Activated CD4-positive, alpha-beta memory T cell treated with anti-CD3 and anti-CD28 coated beads for 36 hours (primary cell): ENCODE measurements at regions of chr5 and their contacts with region 1.

Region 1: GRCh38 chr5:151080623-151081430 is at the start of gene TNIP1:
- DNase-seq: peak; percentile 96
- H3K4me3 Mint-ChIP-seq: peak within 1 kb of the TSS; percentile 89
- H3K27ac Mint-ChIP-seq: peak within 1 kb of the TSS; percentile 94
- H3K4me1 Mint-ChIP-seq: peaks cover 69% of the 10 kb centered on the region
- H3K27me3 Mint-ChIP-seq: no peaks in the 10 kb centered on the region
- total RNA-seq, gene TNIP1: 388 to 401 TPM

Region 2: DNA sequence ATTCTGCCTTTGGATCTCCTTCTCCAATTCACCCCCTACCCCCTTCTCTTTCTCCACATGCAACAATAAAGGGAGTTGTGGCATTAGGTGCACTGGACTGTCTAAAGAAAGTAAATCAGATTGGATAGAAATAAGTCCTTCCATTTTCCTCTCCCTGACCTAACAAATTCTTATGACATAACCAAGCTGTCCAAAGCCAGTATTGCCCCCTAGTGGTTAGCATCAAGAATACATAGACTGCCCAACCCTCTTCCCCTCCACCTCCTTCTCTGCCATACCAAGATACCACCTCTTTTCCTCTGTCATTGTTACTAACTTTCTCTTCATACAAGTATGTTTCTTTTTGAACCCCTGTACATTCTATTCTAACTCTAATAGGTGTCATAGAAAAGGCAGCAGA is 1305.0 kb before region 1 on chr5:
- CTCF ChIA-PET with region 1: no interaction called
- POLR2A ChIA-PET with region 1: no interaction called
- intact Hi-C with region 1: no loop called
- DNase-seq: no peak
- H3K4me3 Mint-ChIP-seq: no peak overlapping the region
- H3K27ac Mint-ChIP-seq: no peak overlapping the region
- H3K4me1 Mint-ChIP-seq: peaks cover 15% of the 10 kb centered on the region
- H3K27me3 Mint-ChIP-seq: no peaks in the 10 kb centered on the region

Region 3: DNA sequence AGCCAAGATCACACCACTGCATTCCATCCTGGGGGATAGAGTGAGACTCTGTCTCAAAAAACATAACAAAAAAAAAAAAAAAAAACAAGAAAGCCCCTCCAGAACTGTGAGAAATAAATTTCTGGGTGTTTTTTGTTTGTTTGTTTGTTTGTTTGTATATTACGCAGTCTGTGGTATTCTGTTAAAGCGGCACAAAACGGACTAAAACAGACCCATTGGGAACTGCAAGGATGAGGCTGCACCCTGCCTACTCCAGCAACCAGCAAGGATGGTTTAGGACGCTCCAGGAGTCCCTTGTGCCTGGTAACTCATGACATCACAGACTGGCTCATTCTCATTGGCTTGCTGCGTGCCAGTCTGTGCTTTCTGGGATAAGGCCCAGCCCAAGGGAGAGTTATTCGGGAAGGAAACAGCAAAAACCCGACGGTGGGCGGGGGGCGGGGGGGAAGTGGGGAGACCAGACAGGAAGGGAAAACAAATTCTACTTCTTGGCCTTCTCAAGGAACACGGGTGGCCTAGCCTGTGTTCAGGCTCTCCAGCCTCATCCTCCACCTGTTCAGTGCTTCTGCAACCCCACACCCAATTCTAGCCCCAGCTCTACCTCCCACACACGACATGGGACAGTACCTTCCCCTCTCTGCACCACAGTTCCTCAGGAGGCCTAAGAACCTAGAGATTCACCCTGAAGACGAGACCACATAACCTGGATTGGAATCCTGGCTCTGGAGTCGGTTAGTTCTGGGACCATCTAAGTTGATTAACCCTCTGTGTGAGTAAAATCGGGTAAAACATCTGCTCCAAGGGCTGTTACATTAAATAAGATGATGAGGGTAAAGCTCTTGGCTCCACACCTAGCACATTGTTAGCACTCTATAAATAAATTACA is 670.9 kb before region 1 on chr5:
- CTCF ChIA-PET with region 1: no interaction called
- POLR2A ChIA-PET with region 1: no interaction called
- intact Hi-C with region 1: loop called (anchors 5 kb)
- DNase-seq: peak; percentile 70
- H3K4me3 Mint-ChIP-seq: peak overlapping the region; percentile 97
- H3K27ac Mint-ChIP-seq: peak overlapping the region; percentile 99
- H3K4me1 Mint-ChIP-seq: peaks cover 39% of the 10 kb centered on the region
- H3K27me3 Mint-ChIP-seq: no peaks in the 10 kb centered on the region

Region 4: DNA sequence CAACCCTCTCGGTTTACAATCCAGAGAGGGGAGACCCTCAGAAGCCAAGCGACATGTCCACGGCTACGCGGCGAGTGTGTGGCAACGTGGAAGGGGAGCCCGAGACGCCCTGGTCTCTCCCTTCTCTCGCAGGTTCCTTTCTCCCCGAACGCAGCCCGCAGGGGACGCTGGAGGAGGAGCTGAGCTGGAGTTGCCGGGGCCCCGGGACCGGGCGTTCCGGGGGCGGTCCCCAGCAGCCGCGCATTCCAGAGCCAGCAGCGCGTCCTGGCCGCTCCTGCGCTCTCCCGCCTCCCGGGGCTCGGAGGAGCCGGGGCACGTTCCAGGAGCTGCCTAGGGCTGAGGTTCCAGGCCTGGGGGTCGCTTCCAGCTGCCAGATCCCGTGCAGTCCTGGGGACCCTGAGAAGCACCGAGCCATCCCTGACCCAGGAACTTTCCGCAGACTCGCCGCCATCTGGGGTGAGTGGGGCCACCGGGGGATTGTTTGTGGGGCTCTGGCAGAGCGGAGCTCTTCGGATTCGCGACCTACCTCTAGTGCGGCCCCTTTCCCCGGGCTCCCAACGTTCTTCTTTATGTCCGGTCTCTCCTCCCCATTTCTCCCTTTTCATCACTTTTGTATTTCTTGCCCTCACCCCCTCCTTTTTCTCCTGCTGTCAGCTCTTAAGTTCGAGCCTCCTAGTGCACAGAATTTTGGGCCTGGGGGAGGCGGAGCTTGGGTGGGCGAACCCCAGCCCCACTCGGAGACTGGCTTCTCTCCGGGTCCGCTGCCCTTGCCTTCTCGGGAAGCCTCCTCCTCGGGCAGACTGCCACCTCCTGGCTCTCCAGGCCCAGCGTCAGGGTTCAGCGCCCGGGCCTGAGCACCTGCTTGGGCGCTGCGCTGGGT is 302.1 kb before region 1 on chr5 and contains the start of gene SMIM3:
- CTCF ChIA-PET with region 1: no interaction called
- POLR2A ChIA-PET with region 1: no interaction called
- intact Hi-C with region 1: loop called (anchors 5 kb)
- DNase-seq: peak; percentile 84
- H3K4me3 Mint-ChIP-seq: peak within 1 kb of the TSS; percentile 99
- H3K27ac Mint-ChIP-seq: peak within 1 kb of the TSS; percentile 84
- H3K4me1 Mint-ChIP-seq: peaks cover 52% of the 10 kb centered on the region
- H3K27me3 Mint-ChIP-seq: no peaks in the 10 kb centered on the region
- total RNA-seq, gene SMIM3: 22.4 to 22.8 TPM

Region 5: GRCh38 chr5:151063142-151063949 is 17.5 kb before region 1 on chr5:
- CTCF ChIA-PET with region 1: interaction called, 3 read pairs
- POLR2A ChIA-PET with region 1: interaction called, 115 read pairs
- intact Hi-C with region 1: loop called (anchors 1 kb)
- DNase-seq: no peak
- H3K4me3 Mint-ChIP-seq: no peak overlapping the region
- H3K27ac Mint-ChIP-seq: peak overlapping the region; percentile 94
- H3K4me1 Mint-ChIP-seq: peaks cover 97% of the 10 kb centered on the region
- H3K27me3 Mint-ChIP-seq: no peaks in the 10 kb centered on the region

Region 6: DNA sequence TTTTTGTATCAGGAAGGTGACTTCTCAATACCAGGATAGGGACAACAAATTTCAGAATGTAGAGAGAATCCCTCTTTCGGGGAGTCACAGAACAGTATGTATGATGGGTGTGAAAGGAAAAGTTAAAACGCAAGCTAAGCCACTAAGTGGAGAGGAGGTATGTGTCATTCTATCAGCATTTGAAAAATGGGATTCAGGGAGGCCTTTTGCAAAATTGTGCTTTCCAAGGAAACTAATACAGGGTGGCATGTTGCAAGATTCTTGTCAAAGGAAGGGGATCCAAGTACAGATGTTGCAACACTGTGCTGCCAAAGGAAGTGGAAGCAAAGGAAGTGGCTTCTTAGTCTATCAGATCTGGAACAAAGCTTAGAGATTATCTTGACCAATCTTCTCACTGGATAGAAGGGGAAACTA is 12.7 kb after region 1 on chr5:
- CTCF ChIA-PET with region 1: interaction called, 8 read pairs
- POLR2A ChIA-PET with region 1: interaction called, 12 read pairs
- intact Hi-C with region 1: loop called (anchors 1 kb)
- DNase-seq: no peak
- H3K4me3 Mint-ChIP-seq: peak overlapping the region; percentile 65
- H3K27ac Mint-ChIP-seq: peak overlapping the region; percentile 92
- H3K4me1 Mint-ChIP-seq: peaks cover 64% of the 10 kb centered on the region
- H3K27me3 Mint-ChIP-seq: no peaks in the 10 kb centered on the region

Region 7: GRCh38 chr5:151213800-151214613 is 133.2 kb after region 1 on chr5:
- CTCF ChIA-PET with region 1: no interaction called
- POLR2A ChIA-PET with region 1: interaction called, 4 read pairs
- intact Hi-C with region 1: loop called (anchors 2 kb)
- DNase-seq: peak; percentile 94
- H3K4me3 Mint-ChIP-seq: peak overlapping the region; percentile 82
- H3K27ac Mint-ChIP-seq: peak overlapping the region; percentile 97
- H3K4me1 Mint-ChIP-seq: peaks cover 69% of the 10 kb centered on the region
- H3K27me3 Mint-ChIP-seq: no peaks in the 10 kb centered on the region